MCF 10A (cell line): ENCODE measurements at regions of chr6 and their contacts with region 1.

Region 1: DNA sequence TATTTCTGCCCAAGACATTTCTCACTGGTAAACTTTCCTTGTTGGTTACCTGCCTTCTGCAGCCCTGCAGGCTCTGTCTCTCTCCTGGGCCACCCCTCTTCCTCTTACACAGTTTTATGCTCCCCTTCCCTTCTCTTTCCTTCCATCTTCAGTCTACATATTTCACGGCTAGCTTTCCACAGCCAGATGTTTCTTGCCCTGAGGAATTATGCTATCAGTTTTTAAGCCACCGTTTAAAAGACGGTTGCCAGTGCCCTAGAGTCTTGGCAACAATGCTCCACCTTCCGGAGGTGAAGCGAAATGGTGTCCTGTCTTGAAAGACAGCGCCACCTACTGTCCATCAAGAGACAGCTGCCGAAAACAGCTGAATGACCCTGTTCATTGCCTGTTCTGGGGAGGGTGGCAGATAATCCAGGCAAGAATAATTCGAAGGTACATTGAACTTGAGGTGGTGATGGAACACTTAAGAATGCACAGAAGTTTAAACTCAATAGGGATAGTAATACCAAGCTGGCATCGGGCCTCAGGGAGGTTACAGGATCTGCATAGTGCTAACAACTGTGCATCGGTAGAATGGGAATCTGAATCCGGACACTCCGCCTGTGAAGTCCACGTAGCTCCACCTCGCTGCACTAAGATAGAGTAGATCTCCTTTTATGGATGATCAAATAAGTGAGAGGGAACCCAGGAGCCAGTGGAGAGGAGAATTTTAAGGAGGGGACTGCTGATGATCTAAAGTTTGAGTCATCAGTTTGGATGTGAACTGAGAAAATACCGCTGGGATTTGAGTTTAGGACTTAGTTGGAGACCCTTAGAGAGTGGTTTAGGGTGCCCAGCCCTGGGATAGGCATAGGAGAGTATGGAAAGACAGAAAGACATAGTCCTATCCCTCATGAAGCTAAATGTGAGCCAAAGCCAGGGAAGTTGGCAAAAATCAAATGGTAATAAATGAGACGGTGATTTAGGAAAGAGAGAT is 4.8 kb upstream of the TRIM40 start:
- DNase-seq: peak; percentile 91
- H3K4me3 Mint-ChIP-seq: peak overlapping the region; percentile 40
- H3K27ac Mint-ChIP-seq: peak overlapping the region; percentile 7
- H3K4me1 Mint-ChIP-seq: peaks cover 20% of the 10 kb centered on the region
- H3K27me3 Mint-ChIP-seq: peaks cover 28% of the 10 kb centered on the region
- CTCF ChIP-seq: peak; percentile 96

Region 2: DNA sequence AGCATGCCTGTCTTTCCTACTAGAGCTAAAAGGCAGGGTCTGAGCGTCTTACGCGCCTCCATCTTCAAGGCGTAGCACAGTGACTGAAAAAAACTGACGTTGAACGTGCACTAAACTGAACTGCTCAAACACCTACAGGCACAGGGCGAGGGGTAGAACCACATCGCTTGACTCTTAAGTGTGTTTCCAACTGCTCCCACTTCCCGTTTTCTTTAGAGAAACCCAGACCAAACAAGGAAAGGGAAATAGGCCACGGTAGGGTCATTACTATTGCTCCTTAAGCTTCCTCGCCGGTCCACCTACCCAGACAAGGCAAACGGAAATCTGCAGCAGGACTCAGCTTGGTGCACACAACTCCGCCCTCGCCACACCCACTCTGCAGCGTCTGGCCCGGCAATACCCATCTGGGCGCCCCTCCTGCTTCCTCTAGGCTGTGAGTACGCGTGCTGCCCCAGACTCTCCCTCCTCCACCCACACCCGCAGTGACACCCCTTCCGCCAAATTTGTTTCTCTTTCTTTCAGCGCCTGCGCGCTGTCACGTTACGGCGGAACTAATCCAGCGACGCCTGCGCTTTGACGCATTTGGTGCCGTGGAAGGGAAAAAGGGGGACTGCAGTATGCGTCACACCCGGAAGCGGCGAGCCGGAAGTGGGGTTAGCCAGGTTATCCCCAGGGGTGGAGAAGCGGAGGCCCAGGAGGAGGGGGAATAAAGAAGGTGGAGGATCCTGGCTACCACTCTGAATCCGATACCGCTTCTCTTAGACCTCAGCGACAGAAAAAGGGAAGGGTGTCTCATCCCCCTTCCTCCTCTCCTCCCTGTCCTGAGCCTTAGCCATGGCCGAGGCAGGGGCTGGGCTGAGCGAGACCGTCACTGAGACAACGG is 64.4 kb before region 1 on chr6 and contains the start of gene PPP1R11:
- CTCF ChIA-PET with region 1: interaction called, 12 read pairs
- POLR2A ChIA-PET with region 1: interaction called, 11 read pairs
- intact Hi-C with region 1: no loop called
- DNase-seq: peak; percentile 99
- H3K4me3 Mint-ChIP-seq: peak within 1 kb of the TSS; percentile 79
- H3K27ac Mint-ChIP-seq: peak within 1 kb of the TSS; percentile 99
- H3K4me1 Mint-ChIP-seq: peaks cover 42% of the 10 kb centered on the region
- H3K27me3 Mint-ChIP-seq: no peaks in the 10 kb centered on the region
- CTCF ChIP-seq: no peak
- total RNA-seq, gene PPP1R11: 60.1 and 82.2 TPM in 2 replicates

Region 3: DNA sequence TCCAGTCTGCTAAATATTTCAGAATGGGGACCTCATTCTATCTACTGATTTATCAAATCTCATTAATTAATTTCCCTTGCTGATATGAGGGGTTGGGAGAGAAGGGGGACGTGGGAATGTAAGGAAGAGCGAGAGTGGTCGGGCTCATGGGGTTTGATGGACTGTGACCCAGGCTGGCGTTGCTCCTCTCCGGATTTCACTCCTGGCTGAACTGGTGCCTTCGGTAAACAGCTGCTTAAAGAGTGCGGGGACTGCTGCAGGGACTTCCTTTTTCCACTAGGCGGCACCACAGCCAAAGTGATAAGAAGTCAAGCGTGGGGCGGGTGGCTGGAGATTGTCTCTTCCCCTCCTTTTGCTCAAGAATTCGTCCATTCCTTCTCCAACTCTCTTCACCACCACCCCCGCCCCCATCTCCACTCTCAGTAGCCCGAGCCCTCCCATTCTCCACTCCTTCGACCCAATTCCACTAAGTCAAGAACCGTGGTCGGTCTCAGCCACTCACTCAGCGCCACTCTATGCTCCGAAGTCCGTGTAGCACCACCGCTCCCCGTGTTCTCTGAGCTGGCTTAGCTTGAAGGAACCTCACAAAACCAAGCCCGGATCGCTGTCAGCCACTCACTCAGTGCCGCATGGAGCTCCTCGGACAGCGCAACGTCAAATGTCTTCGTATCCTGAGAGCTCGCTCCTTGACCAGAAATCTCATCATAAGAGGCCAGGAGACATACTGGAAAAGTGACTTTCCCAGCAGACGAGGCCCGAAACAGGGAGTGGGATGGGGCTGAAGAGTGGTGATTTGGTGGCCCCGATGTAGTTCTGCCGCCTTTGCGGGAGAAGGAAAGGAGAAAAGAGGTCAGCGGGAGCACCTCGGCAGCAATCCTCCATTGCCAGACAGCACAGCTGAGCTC is 28.0 kb before region 1 on chr6:
- CTCF ChIA-PET with region 1: interaction called, 153 read pairs
- POLR2A ChIA-PET with region 1: interaction called, 33 read pairs
- intact Hi-C with region 1: loop called (anchors 1 kb)
- DNase-seq: peak; percentile 91
- H3K4me3 Mint-ChIP-seq: peak overlapping the region; percentile 70
- H3K27ac Mint-ChIP-seq: peak overlapping the region; percentile 84
- H3K4me1 Mint-ChIP-seq: peaks cover 35% of the 10 kb centered on the region
- H3K27me3 Mint-ChIP-seq: peaks cover 7% of the 10 kb centered on the region
- CTCF ChIP-seq: peak; percentile 85

Region 4: GRCh38 chr6:30147062-30147461 is 15.9 kb after region 1 on chr6:
- CTCF ChIA-PET with region 1: interaction called, 42 read pairs
- POLR2A ChIA-PET with region 1: no interaction called
- intact Hi-C with region 1: no loop called
- DNase-seq: no peak
- H3K4me3 Mint-ChIP-seq: no peak overlapping the region
- H3K27ac Mint-ChIP-seq: no peak overlapping the region
- H3K4me1 Mint-ChIP-seq: no peaks in the 10 kb centered on the region
- H3K27me3 Mint-ChIP-seq: peaks cover 27% of the 10 kb centered on the region
- CTCF ChIP-seq: no peak

Region 5: DNA sequence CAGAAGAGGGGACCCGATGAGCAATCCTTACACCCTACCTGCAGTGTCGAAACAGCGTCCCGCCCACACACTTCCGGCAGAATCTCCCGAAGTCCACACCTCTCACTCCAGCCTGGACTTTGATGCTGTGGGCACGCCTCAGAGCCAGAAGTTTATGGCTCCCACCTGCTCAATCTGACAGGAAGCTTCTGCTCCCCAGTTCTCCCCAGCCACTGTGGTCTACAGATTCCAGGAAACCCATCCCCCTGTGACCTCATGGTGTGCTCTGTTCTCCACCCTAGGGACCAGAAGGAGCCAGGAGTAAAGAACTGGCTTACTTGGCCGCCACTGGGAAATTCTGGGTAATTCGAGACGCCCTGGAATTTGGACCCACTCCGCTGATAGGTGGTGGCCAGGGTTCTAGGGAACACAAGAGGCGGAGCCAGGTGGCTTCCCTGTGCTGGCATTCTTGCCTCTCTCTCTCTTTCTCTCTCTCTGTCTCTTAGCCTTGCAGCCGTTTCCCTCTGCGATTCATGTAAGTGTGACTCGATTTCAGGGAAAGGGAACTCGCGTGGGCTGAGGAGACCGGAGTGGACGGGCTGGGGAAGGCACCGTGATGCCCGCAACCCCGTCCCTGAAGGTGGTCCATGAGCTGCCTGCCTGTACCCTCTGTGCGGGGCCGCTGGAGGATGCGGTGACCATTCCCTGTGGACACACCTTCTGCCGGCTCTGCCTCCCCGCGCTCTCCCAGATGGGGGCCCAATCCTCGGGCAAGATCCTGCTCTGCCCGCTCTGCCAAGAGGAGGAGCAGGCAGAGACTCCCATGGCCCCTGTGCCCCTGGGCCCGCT is 32.1 kb after region 1 on chr6 and contains the start of gene TRIM15:
- CTCF ChIA-PET with region 1: interaction called, 24 read pairs
- POLR2A ChIA-PET with region 1: no interaction called
- intact Hi-C with region 1: no loop called
- DNase-seq: peak; percentile 79
- H3K4me3 Mint-ChIP-seq: peak within 1 kb of the TSS; percentile 23
- H3K27ac Mint-ChIP-seq: no peak within 1 kb of the TSS
- H3K4me1 Mint-ChIP-seq: no peaks in the 10 kb centered on the region
- H3K27me3 Mint-ChIP-seq: no peaks in the 10 kb centered on the region
- CTCF ChIP-seq: no peak
- total RNA-seq, gene TRIM15: 0.79 TPM in 1 of 2 replicates, not detected in the other

Region 6: GRCh38 chr6:31665501-31666336 is 1534.5 kb after region 1 on chr6 and contains the start of gene CSNK2B:
- CTCF ChIA-PET with region 1: no interaction called
- POLR2A ChIA-PET with region 1: no interaction called
- intact Hi-C with region 1: no loop called
- DNase-seq: peak; percentile 98
- H3K4me3 Mint-ChIP-seq: peak within 1 kb of the TSS; percentile 99
- H3K27ac Mint-ChIP-seq: peak within 1 kb of the TSS; percentile 99
- H3K4me1 Mint-ChIP-seq: peaks cover 31% of the 10 kb centered on the region
- H3K27me3 Mint-ChIP-seq: no peaks in the 10 kb centered on the region
- CTCF ChIP-seq: no peak
- total RNA-seq, gene CSNK2B: 197 and 209 TPM in 2 replicates